Activated T-helper 1 cell treated with anti-CD3 and anti-CD28 coated beads, Interleukin-12 subunit alpha, Interleukin-12 subunit beta, Interleukin-2, Interleukin-4 antibody, amounts not matched to agents 30 ng/mL and 10 ng/mL and 1 ng/mL, durations not matched to agents 14 hours and 24 hours and 36 hours (primary cell): ENCODE measurements at regions of chr6 and their contacts with region 1.

Region 1: GRCh38 chr6:159104163-159104925 is 59.6 kb upstream of the TAGAP start:
- DNase-seq: peak; percentile 69
- H3K4me3 Mint-ChIP-seq: peak overlapping the region; percentile 67
- H3K27ac Mint-ChIP-seq: peak overlapping the region; percentile 63
- H3K4me1 Mint-ChIP-seq: peaks cover 80% of the 10 kb centered on the region
- H3K27me3 Mint-ChIP-seq: no peaks in the 10 kb centered on the region

Region 2: GRCh38 chr6:159134701-159135364 is 30.5 kb after region 1 on chr6:
- intact Hi-C with region 1: loop called (anchors 1 kb)
- DNase-seq: peak; percentile 67
- H3K4me3 Mint-ChIP-seq: no peak overlapping the region
- H3K27ac Mint-ChIP-seq: no peak overlapping the region
- H3K4me1 Mint-ChIP-seq: peaks cover 10% of the 10 kb centered on the region
- H3K27me3 Mint-ChIP-seq: peaks cover 10% of the 10 kb centered on the region